ENCODE measurements at regions of chr19 and their contacts with region 1.

Region 1: GRCh38 chr19:3434712-3435553 is 45.4 kb downstream of the SMIM24 start:
- DNase-seq: peak; percentile 99

Region 2: DNA sequence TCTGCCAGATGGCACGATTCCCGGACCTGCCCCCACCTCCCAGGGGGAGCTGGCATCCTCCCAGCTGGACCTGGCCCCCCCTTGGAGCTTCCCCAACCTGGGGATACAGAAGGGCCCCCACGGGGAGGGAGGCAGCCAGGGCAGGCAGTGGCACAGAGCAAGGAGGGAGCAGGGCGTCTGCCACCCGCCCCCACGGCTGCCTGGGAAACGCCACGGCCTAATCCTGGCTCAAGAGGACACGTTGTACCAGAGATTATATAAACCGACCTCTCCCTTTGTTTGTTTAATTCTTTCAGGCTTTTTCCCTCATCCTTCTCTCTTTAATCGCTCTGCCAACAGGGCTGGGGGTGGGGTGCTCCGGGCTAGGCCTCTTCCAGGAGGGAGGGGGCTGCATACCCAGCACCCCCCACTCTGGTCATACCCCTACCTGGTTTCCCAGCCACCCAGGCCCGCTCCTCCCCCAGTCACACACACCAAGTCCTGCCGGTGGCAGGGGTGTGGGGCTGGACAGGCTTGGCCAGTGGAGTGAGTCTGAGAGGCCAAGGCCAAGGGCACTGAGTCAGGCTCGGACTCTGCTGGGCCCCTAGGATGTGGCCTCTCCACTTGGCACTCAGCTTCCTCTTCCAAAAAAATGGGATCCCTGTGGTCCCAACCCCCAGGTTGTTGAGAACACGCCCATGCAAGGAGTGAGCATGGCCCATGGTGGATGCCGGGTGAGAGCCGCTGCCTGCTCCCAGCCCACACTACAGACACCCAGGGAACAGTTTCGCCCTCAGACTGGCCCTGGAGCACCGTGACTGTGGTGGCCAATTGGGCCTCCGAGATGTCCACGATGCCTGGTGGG is 98.0 kb before region 1 on chr19:
- intact Hi-C with region 1: loop called in 1 of 2 experiments (anchors 5 kb)
- DNase-seq: peak; percentile 95

Region 3: DNA sequence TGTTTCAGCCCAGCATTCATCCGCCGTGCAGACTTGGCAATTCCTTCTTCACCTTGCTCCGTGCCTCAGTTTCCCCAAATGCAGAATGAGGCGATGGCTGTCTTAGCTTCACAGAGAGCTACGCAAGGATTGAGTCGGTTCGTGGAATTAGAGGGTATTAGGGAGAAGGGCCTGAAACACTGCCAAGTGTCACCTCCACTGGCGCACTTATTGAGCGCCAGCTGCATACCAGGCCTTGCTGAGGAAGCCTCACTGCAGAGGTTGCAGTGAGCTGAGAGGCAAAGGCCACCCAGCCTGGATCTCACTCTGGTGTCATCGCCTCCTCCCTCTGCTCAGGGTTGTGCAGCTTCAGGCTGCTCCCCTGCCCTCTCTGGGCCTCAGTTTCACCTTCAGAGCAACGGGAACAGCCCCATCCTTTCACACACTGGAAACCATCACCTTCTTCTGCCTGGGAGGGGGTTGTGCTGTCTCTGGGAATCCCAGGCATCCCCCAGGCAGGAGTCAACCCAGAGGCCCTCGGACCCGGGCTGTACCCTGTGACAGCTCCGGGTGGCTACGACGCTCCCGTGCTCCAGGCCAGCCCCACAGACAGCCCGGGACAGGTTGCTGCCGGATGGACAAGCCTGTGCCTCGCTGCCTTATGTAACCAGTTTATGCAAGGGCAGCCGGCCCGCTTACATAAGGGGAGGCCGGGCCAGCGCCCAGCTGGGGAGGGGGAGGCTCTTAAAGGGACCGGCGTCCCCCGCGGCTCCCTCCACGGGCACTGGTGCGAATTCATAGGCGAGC is 36.6 kb before region 1 on chr19:
- intact Hi-C with region 1: no loop called
- DNase-seq: peak; percentile 88

Region 4: DNA sequence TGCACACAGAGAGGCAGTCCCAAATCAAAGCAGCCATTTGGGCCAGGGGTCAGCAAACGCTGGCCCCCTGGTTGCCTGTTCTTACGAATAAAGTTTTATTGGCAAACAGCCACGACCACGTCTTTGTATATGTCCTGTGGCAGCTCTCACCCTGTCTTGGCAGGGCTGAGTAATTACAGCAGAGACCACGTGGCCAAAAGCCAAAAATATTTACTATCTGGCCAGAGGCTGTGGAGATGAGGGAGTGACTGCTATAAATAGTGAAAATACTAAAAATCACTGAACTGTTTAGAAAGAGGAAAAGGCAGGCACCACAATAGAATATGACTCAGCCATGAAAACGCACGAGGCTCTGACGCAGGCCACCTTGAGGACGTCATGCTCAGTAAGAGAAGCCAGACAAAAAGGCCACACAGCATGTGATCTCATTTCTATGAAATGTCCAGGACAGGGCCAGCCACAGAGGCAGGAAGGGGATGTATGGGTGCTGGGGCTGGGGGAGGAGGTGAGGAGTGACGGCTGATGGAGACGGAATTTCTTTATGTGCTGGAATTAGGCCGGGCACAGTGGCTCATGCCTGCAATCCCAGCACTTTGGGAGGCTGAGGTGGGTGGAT is 16.0 kb after region 1 on chr19:
- intact Hi-C with region 1: no loop called
- DNase-seq: peak; percentile 96

Region 5: GRCh38 chr19:3471954-3472655 is 37.2 kb after region 1 on chr19:
- intact Hi-C with region 1: loop called in 1 of 2 experiments (anchors 5 kb)
- DNase-seq: no peak

Measured in posterior vena cava (tissue), 2 donors.